ENCODE measurements at regions of chr2 and their contacts with region 1.

Region 1: GRCh38 chr2:42196403-42197267 is 27.5 kb downstream of the EML4 start:
- DNase-seq: peak; percentile 42
- H3K4me3 Mint-ChIP-seq: no peak overlapping the region
- H3K27ac Mint-ChIP-seq: no peak overlapping the region
- H3K4me1 Mint-ChIP-seq: peaks cover 75% of the 10 kb centered on the region
- H3K27me3 Mint-ChIP-seq: no peaks in the 10 kb centered on the region

Region 2: DNA sequence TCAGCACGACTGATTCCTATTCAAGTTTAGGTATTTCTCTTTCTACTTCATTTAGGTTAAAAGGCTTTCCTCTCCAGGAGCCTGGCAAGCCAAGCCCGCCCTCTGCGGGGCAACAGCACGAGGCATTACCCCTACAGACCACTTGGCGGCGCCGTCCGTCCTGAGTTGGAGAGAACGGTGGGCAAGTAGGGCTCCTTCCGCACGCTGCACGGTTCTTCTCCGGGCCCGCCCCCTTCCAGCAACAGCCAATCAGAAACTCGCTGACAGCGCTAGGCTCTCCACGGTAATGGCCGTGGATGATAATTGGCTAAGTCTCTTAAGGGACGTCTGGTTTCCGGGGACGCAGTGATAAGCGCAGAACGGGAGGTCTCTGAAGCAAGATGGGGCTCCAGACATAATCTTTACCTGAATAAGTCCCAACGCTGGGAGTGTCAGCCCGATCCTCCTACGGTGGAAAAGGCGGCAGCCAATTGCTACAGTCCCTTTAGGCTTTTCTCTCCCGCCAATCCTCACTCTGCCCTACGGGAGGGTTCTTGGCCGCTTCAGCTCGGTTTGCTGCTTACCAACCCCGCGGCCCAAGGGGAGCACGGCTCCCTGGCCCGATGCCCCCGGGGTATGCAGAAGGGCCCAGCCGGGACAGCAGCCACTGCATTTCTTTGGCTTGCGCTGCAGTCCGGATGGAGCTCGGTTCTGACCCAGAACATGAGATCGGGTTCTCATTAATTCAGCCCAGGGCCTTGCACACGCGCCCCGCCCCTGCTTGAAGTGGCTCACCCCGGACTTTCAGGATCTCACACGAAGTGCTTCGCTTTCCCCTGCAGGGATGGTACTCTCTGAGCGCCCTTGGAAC is 355.7 kb before region 1 on chr2:
- CTCF ChIA-PET with region 1: no interaction called
- POLR2A ChIA-PET with region 1: no interaction called
- intact Hi-C with region 1: loop called (anchors 10 kb)
- DNase-seq: peak; percentile 99
- H3K4me3 Mint-ChIP-seq: peak overlapping the region; percentile 85
- H3K27ac Mint-ChIP-seq: peak overlapping the region; percentile 81
- H3K4me1 Mint-ChIP-seq: peaks cover 6% of the 10 kb centered on the region
- H3K27me3 Mint-ChIP-seq: peaks cover 8% of the 10 kb centered on the region

Region 3: DNA sequence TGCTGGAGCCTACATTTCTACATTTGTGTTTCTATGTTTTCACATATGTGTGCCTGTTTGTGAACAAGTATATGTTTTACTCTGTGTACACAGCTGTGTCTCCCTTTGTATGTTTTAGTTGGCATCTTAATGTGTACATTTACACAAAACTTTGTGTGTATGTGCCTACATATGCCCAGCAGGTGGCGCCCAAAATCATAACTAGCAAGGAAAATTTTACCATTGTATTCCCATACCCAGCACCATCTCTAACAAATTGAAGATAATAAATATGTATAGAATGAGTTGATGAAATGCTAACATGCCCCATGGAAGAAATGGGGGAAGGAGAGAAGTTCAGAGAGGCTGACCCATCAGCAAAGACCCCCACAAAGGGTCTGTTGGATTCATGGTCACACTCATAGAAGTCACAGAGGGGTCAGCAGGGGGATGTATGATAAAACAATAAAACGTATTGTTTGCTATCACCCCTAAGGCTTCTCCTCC is 100.7 kb before region 1 on chr2:
- CTCF ChIA-PET with region 1: interaction called, 42 read pairs
- POLR2A ChIA-PET with region 1: no interaction called
- intact Hi-C with region 1: loop called (anchors 1 kb)
- DNase-seq: peak; percentile 82
- H3K4me3 Mint-ChIP-seq: no peak overlapping the region
- H3K27ac Mint-ChIP-seq: no peak overlapping the region
- H3K4me1 Mint-ChIP-seq: peaks cover 38% of the 10 kb centered on the region
- H3K27me3 Mint-ChIP-seq: no peaks in the 10 kb centered on the region

Region 4: DNA sequence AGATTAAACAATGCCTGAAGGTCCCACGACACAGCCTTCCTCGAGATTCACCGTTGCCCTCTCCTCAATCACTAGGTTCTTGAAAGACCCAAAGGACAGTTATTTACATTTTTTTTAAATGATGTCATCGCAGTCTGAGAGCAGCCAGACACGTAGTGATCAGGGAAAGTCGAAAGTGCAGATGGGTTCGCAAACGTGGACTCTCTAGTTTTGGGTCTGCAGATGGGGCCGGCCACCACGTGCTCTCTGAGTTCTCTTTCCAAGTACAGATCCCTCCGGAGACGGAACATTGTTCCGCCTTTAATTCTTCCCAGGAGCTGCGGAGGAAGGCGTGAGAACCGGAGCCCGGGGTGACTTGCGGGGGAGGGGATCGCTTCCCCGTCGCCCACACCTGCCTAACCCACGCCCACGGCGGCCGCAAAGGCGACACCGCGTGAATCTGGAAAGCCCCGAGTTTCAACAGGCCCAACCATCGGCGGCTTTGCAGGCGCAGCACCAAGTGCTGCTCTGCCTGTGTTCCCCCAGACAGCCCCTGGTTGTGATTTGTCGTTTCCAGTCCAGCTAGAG is 94.5 kb before region 1 on chr2:
- CTCF ChIA-PET with region 1: interaction called, 13 read pairs
- POLR2A ChIA-PET with region 1: no interaction called
- intact Hi-C with region 1: loop called (anchors 1 kb)
- DNase-seq: peak; percentile 91
- H3K4me3 Mint-ChIP-seq: peak overlapping the region; percentile 76
- H3K27ac Mint-ChIP-seq: peak overlapping the region; percentile 87
- H3K4me1 Mint-ChIP-seq: peaks cover 49% of the 10 kb centered on the region
- H3K27me3 Mint-ChIP-seq: no peaks in the 10 kb centered on the region

Region 5: DNA sequence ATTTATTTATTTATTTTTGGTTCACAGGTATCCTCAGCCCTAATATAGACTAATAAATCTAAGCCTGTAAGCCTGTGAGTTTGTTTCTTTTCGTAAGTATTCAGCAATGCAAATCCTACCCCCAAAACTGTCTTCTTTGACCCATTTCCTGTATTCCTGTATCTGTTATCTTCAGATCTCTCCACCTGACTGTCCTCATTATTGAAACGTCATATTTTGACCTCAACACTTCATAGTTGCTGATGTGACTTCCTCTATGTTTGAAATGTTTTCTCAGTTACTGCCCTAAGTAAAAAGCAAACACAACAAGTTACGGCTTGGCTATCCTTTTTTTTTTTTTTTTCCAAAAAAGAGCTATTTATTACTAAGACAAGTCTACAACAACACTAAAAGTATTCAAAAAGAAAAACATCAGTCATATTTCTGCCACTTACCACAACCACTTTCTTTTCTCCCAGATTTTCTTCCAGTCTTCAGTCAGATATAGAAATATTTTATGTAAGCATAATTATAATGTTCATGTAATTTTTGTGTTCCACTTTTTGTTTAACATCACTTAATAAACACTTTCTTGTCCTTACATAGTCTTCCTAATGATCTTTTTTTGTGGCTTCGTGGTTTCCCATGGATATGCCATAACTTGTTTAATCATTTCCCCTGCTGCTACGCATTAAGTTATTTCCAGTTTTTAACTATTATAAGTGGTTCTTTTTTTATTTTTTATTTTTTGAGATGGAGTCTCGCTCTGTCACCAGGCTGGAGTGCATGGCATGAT is 72.4 kb before region 1 on chr2:
- CTCF ChIA-PET with region 1: no interaction called
- POLR2A ChIA-PET with region 1: no interaction called
- intact Hi-C with region 1: loop called (anchors 2 kb)
- DNase-seq: no peak
- H3K4me3 Mint-ChIP-seq: peak overlapping the region; percentile 32
- H3K27ac Mint-ChIP-seq: peak overlapping the region; percentile 42
- H3K4me1 Mint-ChIP-seq: peaks cover 58% of the 10 kb centered on the region
- H3K27me3 Mint-ChIP-seq: no peaks in the 10 kb centered on the region

Region 6: DNA sequence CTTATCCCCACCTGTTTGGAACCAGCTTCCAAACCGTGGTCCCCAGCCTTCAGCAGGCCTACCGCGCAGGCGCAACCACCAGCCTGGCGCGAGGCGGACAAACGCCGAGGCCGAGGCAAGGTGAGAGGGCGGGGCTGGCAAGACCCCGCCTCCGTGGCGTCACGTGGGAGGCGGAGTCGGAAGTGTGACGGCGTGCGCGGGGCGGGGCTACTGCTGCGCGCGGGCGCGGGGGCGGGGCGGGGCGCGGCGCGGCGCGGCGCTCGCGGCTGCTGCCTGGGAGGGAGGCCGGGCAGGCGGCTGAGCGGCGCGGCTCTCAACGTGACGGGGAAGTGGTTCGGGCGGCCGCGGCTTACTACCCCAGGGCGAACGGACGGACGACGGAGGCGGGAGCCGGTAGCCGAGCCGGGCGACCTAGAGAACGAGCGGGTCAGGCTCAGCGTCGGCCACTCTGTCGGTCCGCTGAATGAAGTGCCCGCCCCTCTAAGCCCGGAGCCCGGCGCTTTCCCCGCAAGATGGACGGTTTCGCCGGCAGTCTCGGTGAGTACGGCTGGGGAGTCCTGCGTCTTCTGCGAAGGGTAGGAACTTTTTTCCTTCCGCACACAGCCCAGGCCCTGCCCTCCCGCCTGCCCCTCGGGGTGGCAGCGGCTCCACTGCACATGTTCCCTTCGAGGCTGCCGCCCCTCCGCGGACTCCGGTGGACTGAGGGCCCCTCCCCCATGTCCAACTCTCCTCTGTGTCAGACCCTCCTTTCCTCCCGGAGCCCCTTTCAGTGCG is 27.3 kb before region 1 on chr2 and contains the start of gene EML4:
- CTCF ChIA-PET with region 1: interaction called, 13 read pairs
- POLR2A ChIA-PET with region 1: interaction called, 3 read pairs
- intact Hi-C with region 1: loop called (anchors 1 kb)
- DNase-seq: peak; percentile 94
- H3K4me3 Mint-ChIP-seq: no peak within 1 kb of the TSS
- H3K27ac Mint-ChIP-seq: no peak within 1 kb of the TSS
- H3K4me1 Mint-ChIP-seq: peaks cover 22% of the 10 kb centered on the region
- H3K27me3 Mint-ChIP-seq: no peaks in the 10 kb centered on the region
- total RNA-seq, gene EML4: 67.4 to 69.8 TPM

Region 7: GRCh38 chr2:42238644-42239288 is 42.1 kb after region 1 on chr2:
- CTCF ChIA-PET with region 1: interaction called, 5 read pairs
- POLR2A ChIA-PET with region 1: no interaction called
- intact Hi-C with region 1: loop called (anchors 2 kb)
- DNase-seq: peak; percentile 66
- H3K4me3 Mint-ChIP-seq: no peak overlapping the region
- H3K27ac Mint-ChIP-seq: no peak overlapping the region
- H3K4me1 Mint-ChIP-seq: peaks cover 77% of the 10 kb centered on the region
- H3K27me3 Mint-ChIP-seq: no peaks in the 10 kb centered on the region

Measured in activated CD4-positive, alpha-beta memory T cell treated with anti-CD3 and anti-CD28 coated beads for 36 hours (primary cell).